ENCODE measurements at regions of chr11 and their contacts with region 1.

Region 1: GRCh38 chr11:75280227-75280701 is 39.7 kb downstream of the TPBGL start:
- DNase-seq: peak; percentile 70
- H3K4me3 Mint-ChIP-seq: no peak overlapping the region
- H3K27ac Mint-ChIP-seq: no peak overlapping the region
- H3K4me1 Mint-ChIP-seq: no peaks in the 10 kb centered on the region
- H3K27me3 Mint-ChIP-seq: no peaks in the 10 kb centered on the region
- CTCF ChIP-seq: peak; percentile 90

Region 2: GRCh38 chr11:75293903-75294302 is 13.6 kb after region 1 on chr11:
- CTCF ChIA-PET with region 1: interaction called, 26 read pairs
- POLR2A ChIA-PET with region 1: interaction called, 3 read pairs
- intact Hi-C with region 1: no loop called
- DNase-seq: no peak
- H3K4me3 Mint-ChIP-seq: no peak overlapping the region
- H3K27ac Mint-ChIP-seq: no peak overlapping the region
- H3K4me1 Mint-ChIP-seq: no peaks in the 10 kb centered on the region
- H3K27me3 Mint-ChIP-seq: no peaks in the 10 kb centered on the region
- CTCF ChIP-seq: no peak

Region 3: GRCh38 chr11:75308118-75308517 is 27.9 kb after region 1 on chr11:
- CTCF ChIA-PET with region 1: interaction called, 13 read pairs
- POLR2A ChIA-PET with region 1: no interaction called
- intact Hi-C with region 1: no loop called
- DNase-seq: no peak
- H3K4me3 Mint-ChIP-seq: no peak overlapping the region
- H3K27ac Mint-ChIP-seq: no peak overlapping the region
- H3K4me1 Mint-ChIP-seq: no peaks in the 10 kb centered on the region
- H3K27me3 Mint-ChIP-seq: no peaks in the 10 kb centered on the region
- CTCF ChIP-seq: no peak

Region 4: DNA sequence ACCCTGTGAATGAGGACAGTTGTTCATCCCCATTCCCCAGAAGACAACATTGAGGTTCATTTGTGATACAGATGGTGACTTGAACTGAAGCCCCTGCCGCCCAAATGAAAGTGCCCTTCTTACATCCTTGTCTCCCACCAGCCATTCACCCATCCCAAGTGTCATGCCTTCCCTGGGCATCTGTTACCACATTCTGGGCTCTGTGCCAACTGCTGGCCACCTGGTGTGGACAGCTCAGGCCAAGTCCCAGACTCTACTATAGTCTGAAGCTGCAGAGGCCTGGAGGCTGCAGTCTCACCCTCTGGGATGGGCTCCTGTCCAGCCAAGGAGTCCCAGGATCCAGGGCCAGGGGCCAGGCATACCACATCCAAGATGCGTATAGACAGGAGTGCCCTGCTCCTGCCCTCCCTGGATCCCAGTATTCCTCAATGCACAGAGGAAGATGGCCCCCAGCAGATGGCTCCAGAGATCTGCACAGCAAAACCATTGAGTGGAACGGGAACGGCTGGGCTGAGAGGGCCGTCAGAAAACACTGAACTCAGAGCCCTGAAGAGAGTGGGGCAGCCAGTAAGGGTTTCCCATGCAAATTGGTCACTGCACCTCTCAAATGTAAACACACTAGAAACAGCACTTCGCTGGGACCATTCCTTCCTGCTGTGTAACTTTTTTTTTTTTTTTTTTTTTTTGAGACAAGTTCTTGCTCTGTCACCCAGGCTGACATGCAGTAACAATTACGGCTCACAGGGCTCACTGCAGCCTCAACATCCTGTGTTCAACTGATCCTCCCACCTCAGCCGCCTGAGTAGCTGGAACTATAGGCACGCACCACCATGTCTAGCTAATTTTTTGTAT is 48.4 kb after region 1 on chr11:
- CTCF ChIA-PET with region 1: interaction called, 28 read pairs
- POLR2A ChIA-PET with region 1: no interaction called
- intact Hi-C with region 1: loop called (anchors 1 kb)
- DNase-seq: peak; percentile 92
- H3K4me3 Mint-ChIP-seq: peak overlapping the region; percentile 26
- H3K27ac Mint-ChIP-seq: no peak overlapping the region
- H3K4me1 Mint-ChIP-seq: peaks cover 27% of the 10 kb centered on the region
- H3K27me3 Mint-ChIP-seq: no peaks in the 10 kb centered on the region
- CTCF ChIP-seq: peak; percentile 58

Region 5: DNA sequence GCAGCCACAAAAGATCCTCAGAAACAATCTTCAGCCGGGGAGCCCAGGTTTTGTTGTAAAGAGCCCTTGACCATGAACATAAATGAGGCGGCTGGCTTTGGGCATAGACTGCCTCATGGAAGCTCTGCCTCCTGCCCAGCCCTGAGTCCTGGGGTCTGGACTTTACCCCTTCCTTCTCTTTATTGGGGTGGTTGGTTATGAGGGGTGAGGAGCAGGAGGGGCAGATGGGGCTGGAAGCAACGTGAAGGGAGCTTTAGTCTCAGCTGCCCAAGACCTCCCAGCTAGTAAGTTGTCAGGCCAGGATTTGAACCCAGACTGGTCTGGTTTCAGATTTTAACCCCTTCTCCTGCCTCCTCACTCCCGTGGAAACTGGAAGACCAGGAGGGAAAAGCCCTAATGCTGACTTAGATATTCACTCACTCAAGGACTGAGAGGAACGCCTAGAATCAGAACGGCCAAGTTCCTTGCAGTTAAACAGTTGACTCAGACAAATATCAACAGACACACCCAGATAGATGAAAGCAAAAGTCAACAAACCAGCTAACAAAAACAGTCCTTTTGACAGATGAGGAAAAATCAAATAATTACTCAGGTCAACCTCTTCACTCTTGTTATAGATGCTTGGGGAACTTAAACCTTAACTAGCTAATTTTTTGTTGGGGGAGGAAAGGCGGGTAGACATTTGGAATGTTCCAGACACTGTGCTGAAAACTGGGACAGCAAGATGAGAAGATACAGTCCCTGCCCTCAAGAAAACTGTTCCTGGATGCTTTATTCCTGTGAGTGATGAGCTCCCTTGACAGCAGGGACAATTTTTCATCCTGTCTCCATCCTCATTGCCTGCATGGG is 91.9 kb after region 1 on chr11:
- CTCF ChIA-PET with region 1: interaction called, 11 read pairs
- POLR2A ChIA-PET with region 1: no interaction called
- intact Hi-C with region 1: no loop called
- DNase-seq: peak; percentile 54
- H3K4me3 Mint-ChIP-seq: peak overlapping the region; percentile 38
- H3K27ac Mint-ChIP-seq: no peak overlapping the region
- H3K4me1 Mint-ChIP-seq: peaks cover 6% of the 10 kb centered on the region
- H3K27me3 Mint-ChIP-seq: no peaks in the 10 kb centered on the region
- CTCF ChIP-seq: no peak

Region 6: DNA sequence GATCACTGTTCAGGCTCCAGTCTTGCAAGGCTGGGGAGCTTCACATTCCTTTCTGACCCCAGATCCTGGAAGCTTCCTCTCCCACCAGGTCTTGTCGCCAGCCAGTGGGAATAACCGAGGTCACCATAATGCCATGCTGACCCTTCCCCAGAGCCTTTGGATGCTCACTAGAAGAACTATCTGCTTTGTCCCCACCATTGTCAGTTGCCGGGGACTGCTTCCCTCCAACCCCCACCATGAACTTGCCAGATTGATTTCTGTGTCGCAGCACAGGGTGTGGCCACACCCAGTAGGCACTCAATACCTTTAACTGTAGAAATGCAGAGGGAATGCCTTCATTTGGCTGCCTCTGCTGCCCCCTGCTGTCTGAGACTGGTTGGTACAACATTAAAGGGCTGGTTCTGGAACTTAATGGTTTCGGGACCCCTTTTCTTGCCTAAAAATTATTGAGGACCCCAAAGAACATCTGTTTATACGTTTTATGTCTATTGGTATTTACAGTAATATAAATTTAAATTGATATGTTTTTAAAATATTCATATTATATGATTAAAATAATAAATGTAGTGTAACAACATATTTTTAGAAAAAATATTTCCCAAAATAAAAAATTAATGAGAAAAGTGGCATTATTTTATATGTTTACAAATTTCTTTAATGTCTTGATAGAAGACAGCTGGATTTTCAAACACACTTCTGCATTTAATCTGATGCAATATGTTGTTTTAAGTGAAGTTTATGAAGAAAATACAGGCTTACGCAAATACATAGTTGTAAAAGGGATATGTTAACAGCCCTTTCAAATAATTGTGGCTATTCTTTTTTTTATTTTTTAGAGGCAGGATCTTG is 252.2 kb after region 1 on chr11:
- CTCF ChIA-PET with region 1: interaction called, 8 read pairs
- POLR2A ChIA-PET with region 1: no interaction called
- intact Hi-C with region 1: loop called (anchors 2 kb)
- DNase-seq: peak; percentile 80
- H3K4me3 Mint-ChIP-seq: no peak overlapping the region
- H3K27ac Mint-ChIP-seq: no peak overlapping the region
- H3K4me1 Mint-ChIP-seq: peaks cover 5% of the 10 kb centered on the region
- H3K27me3 Mint-ChIP-seq: no peaks in the 10 kb centered on the region
- CTCF ChIP-seq: peak; percentile 87

Measured in MCF 10A (cell line).